IMR-90 (cell line): ENCODE measurements at regions of chr3 and their contacts with region 1.

Region 1: GRCh38 chr3:138768946-138769345 is 65.8 kb downstream of the PIK3CB start:
- DNase-seq: no peak
- ATAC-seq: 0 out of 2 replicates have a peak, but pooled peaks have one; percentile 14
- H3K4me3 ChIP-seq: no peak overlapping the region
- H3K27ac ChIP-seq: no peak overlapping the region
- H3K4me1 ChIP-seq: no peaks in the 10 kb centered on the region
- H3K27me3 ChIP-seq: no peaks in the 10 kb centered on the region
- CTCF ChIP-seq: no peak
- POLR2A ChIP-seq: no peak
- RAD21 ChIP-seq: no peak

Region 2: DNA sequence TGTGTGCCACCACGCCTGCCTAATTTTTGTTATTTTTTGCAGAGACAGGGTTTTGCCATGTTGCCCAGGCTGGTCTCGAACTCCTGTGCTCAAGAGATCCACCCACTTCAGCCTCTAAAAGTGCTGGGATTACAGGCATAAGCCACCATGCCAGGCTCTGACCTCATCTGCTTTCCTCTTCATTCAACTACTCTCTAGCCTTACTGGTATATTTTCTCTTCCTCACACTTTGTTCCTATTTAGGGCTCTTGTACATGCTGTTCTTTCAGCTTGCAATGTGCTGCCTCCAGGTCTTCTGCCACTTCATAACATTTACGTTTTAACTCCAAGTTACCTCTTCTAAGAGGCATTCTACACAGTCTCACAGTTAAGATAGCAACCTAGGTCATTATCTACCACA is 30.9 kb after region 1 on chr3:
- CTCF ChIA-PET with region 1: no interaction called
- POLR2A ChIA-PET with region 1: interaction called, 17 read pairs
- dilution Hi-C with region 1: no loop called
- in situ Hi-C with region 1: no loop called
- intact Hi-C with region 1: no loop called
- DNase-seq: no peak
- ATAC-seq: no peak
- H3K4me3 ChIP-seq: no peak overlapping the region
- H3K27ac ChIP-seq: no peak overlapping the region
- H3K4me1 ChIP-seq: 0 out of 2 replicates have a peak, but pooled peaks cover 2% of the 10 kb centered on the region
- H3K27me3 ChIP-seq: no peaks in the 10 kb centered on the region
- CTCF ChIP-seq: no peak
- POLR2A ChIP-seq: no peak
- RAD21 ChIP-seq: no peak

Region 3: GRCh38 chr3:139173372-139174108 is 404.6 kb after region 1 on chr3:
- CTCF ChIA-PET with region 1: no interaction called
- POLR2A ChIA-PET with region 1: no interaction called
- dilution Hi-C with region 1: no loop called
- in situ Hi-C with region 1: no loop called
- intact Hi-C with region 1: no loop called
- DNase-seq: no peak
- ATAC-seq: no peak; the same call in 1 of the 2 replicates
- H3K4me3 ChIP-seq: no peak overlapping the region; the same call in 1 of the 2 replicates
- H3K27ac ChIP-seq: no peak overlapping the region
- H3K4me1 ChIP-seq: no peaks in the 10 kb centered on the region
- H3K27me3 ChIP-seq: no peaks in the 10 kb centered on the region
- CTCF ChIP-seq: no peak
- POLR2A ChIP-seq: no peak
- RAD21 ChIP-seq: no peak